ENCODE measurements at regions of chr6 and their contacts with region 1.

Region 1: GRCh38 chr6:130322673-130323268 is 43.0 kb upstream of the TMEM200A start:
- DNase-seq: peak; percentile 53
- H3K4me3 ChIP-seq: no peak overlapping the region
- H3K27ac ChIP-seq: no peak overlapping the region
- H3K4me1 ChIP-seq: no peaks in the 10 kb centered on the region
- H3K27me3 ChIP-seq: peaks cover 0 to 9% of the 10 kb centered on the region in 2 experiments
- CTCF ChIP-seq: peak; percentile 74
- POLR2A ChIP-seq: no peak

Region 2: GRCh38 chr6:130282234-130282995 is 40.4 kb before region 1 on chr6:
- CTCF ChIA-PET with region 1: interaction called, 3 read pairs
- POLR2A ChIA-PET with region 1: no interaction called
- dilution Hi-C with region 1: no loop called
- intact Hi-C with region 1: loop called (anchors 1 kb)
- DNase-seq: peak; percentile 19
- H3K4me3 ChIP-seq: no peak overlapping the region
- H3K27ac ChIP-seq: no peak overlapping the region
- H3K4me1 ChIP-seq: no peaks in the 10 kb centered on the region
- H3K27me3 ChIP-seq: peaks cover 2 to 5% of the 10 kb centered on the region in 2 experiments
- CTCF ChIP-seq: peak in 1 of 2 donors; percentile 21
- POLR2A ChIP-seq: no peak

Region 3: GRCh38 chr6:130293800-130294199 is 29.0 kb before region 1 on chr6:
- CTCF ChIA-PET with region 1: interaction called, 23 read pairs
- POLR2A ChIA-PET with region 1: no interaction called
- dilution Hi-C with region 1: no loop called
- intact Hi-C with region 1: no loop called
- DNase-seq: peak; percentile 51
- H3K4me3 ChIP-seq: no peak overlapping the region
- H3K27ac ChIP-seq: no peak overlapping the region
- H3K4me1 ChIP-seq: no peaks in the 10 kb centered on the region
- H3K27me3 ChIP-seq: peaks cover 0 to 3% of the 10 kb centered on the region in 2 experiments
- CTCF ChIP-seq: peak; percentile 38 to 63
- POLR2A ChIP-seq: no peak

Region 4: DNA sequence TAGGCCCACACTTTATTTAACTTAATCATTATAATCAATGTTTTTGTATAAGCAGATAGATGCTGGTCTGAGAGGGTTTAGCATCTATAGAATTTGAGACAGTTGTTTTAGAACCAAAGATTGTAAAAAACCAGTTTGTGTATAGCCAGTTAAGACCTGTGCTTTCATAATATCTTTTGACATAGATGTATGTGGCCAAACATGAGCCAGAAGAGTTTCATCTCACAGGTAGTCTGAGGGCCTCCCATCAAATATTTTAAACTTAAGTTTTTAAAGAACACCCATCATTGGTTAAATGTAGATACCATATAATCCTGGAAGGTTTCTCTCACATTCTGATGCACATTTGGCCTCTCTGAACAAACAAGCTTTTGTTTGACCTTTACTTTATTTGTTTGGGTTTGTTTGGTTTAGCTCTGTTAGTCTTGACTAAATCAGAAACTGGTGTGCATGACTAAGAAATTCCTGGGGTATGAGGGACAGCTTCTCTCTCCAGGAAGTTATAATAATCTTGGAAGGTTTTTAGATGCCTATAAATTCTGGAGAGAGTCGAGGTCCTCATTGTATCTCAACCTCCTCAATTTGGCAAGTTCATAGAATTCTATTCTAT is 14.9 kb before region 1 on chr6:
- CTCF ChIA-PET with region 1: interaction called, 11 read pairs
- POLR2A ChIA-PET with region 1: no interaction called
- dilution Hi-C with region 1: no loop called
- intact Hi-C with region 1: no loop called
- DNase-seq: no peak
- H3K4me3 ChIP-seq: no peak overlapping the region
- H3K27ac ChIP-seq: no peak overlapping the region
- H3K4me1 ChIP-seq: no peaks in the 10 kb centered on the region
- H3K27me3 ChIP-seq: no peaks in the 10 kb centered on the region
- CTCF ChIP-seq: no peak
- POLR2A ChIP-seq: no peak

Region 5: DNA sequence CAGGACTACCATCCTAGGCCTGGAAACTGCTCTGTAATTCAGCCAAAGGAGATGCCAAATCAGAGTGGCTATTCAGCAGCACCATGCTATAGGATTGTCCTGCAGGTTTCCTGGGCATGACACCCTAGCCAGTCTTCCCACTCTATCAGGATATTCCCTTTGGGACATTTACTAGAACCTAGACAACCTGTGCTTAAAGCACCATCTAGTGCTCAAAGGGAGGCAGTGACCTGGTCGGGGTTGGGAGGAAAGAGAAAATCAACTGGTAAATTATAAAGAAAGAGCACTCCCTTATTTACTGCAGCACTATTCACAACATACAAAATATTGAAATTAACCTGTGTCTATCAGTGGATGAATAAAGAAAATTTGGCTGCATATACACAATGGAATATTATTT is 437.2 kb after region 1 on chr6:
- CTCF ChIA-PET with region 1: interaction called, 23 read pairs
- POLR2A ChIA-PET with region 1: no interaction called
- dilution Hi-C with region 1: no loop called
- intact Hi-C with region 1: loop called (anchors 1 kb)
- DNase-seq: peak; percentile 47
- H3K4me3 ChIP-seq: no peak overlapping the region
- H3K27ac ChIP-seq: no peak overlapping the region
- H3K4me1 ChIP-seq: no peaks in the 10 kb centered on the region
- H3K27me3 ChIP-seq: peaks cover 0 to 10% of the 10 kb centered on the region in 2 experiments
- CTCF ChIP-seq: peak; percentile 56 to 72
- POLR2A ChIP-seq: no peak

Region 6: GRCh38 chr6:130843575-130844320 is 521.0 kb after region 1 on chr6:
- CTCF ChIA-PET with region 1: interaction called, 23 read pairs
- POLR2A ChIA-PET with region 1: no interaction called
- dilution Hi-C with region 1: no loop called
- intact Hi-C with region 1: loop called (anchors 1 kb)
- DNase-seq: peak; percentile 64
- H3K4me3 ChIP-seq: no peak overlapping the region
- H3K27ac ChIP-seq: no peak overlapping the region
- H3K4me1 ChIP-seq: no peaks in the 10 kb centered on the region
- H3K27me3 ChIP-seq: no peaks in the 10 kb centered on the region
- CTCF ChIP-seq: peak; percentile 34 to 35
- POLR2A ChIP-seq: no peak

Region 7: DNA sequence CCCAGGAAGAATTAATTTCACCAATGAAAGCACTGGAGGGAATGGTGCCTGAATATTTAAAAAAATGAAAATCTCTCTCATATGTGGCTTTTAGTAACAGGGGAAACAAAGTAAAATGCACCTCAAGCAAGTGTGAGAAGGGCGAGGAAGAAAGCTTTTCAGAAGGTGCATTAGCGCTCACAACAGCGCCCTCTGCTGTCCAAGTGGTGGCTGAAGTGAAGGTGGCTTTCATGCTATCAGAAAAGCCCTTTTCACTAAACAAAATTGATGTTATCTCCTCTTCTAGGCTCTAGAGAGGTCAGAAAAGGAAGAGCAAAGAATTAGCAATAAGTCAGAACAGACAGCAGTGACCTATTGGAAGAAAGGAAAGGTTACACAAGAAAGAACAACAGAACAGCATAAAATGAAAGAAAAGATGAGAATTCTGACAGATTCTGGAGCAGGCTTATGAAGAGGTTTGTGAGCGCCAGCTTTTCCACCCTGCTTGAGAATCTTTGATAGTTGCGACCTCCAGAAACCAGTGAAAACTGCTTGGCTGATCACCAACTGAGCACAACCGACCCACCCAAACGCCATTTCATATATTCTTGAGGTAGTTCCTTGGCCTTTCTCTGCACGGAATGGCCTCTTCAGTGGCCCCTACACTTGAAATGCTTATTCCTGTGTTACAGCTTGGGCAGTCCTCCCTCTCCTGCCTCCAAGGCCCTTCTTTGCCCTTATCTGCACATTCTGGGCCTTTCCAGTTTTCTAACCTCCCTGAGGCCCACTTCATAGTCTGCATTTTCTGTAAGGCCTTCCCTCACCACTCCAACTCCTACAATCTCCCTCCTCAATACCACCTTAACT is 549.7 kb after region 1 on chr6:
- CTCF ChIA-PET with region 1: interaction called, 12 read pairs
- POLR2A ChIA-PET with region 1: no interaction called
- dilution Hi-C with region 1: no loop called
- intact Hi-C with region 1: loop called (anchors 1 kb)
- DNase-seq: peak; percentile 51
- H3K4me3 ChIP-seq: no peak overlapping the region
- H3K27ac ChIP-seq: no peak overlapping the region
- H3K4me1 ChIP-seq: no peaks in the 10 kb centered on the region
- H3K27me3 ChIP-seq: no peaks in the 10 kb centered on the region
- CTCF ChIP-seq: peak; percentile 85 to 90
- POLR2A ChIP-seq: no peak